PC-9 (cell line): ENCODE measurements at regions of chr7 and their contacts with region 1.

Region 1: DNA sequence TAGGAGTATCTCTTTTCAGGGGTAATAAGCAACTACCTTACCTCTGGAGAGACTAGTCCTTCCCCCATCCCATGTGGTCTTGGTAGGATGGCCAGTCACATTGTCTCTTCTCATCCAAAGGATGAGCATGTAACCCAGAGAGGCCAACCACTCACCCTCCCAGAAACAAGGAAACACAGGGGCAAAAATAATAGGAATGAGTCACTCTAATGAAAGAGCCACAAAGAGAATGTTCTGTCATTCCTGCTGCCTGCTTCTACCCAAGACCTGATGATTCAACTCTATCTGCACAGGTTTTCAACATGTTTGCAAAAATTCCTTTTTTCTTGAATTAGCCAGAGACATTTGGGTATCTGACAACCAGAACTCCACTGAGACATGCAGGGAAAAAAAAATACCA is 99.3 kb upstream of the NFE2L3 start:
- DNase-seq: peak in 1 of 2 experiments; percentile 86
- H3K4me3 ChIP-seq: no peak overlapping the region
- H3K27ac ChIP-seq: peak overlapping the region; percentile 7; the same call in 1 of the 2 replicates
- H3K4me1 ChIP-seq: peaks cover 9% of the 10 kb centered on the region
- H3K27me3 ChIP-seq: no peaks in the 10 kb centered on the region
- CTCF ChIP-seq: no peak

Region 2: GRCh38 chr7:26034391-26034790 is 18.3 kb before region 1 on chr7:
- CTCF ChIA-PET with region 1: interaction called, 16 read pairs
- POLR2A ChIA-PET with region 1: no interaction called
- intact Hi-C with region 1: no loop called
- DNase-seq: peak in 1 of 2 experiments; percentile 30
- H3K4me3 ChIP-seq: no peak overlapping the region
- H3K27ac ChIP-seq: no peak overlapping the region
- H3K4me1 ChIP-seq: no peaks in the 10 kb centered on the region
- H3K27me3 ChIP-seq: peaks cover 11% of the 10 kb centered on the region; the same call in 1 of the 2 replicates
- CTCF ChIP-seq: no peak